ENCODE measurements at regions of chr1 and their contacts with region 1.

Region 1: GRCh38 chr1:147890177-147890790 is 12.3 kb upstream of the GJA8 start:
- DNase-seq: peak; percentile 87
- H3K4me3 ChIP-seq: no peak overlapping the region
- H3K27ac ChIP-seq: no peak overlapping the region
- H3K4me1 ChIP-seq: peaks cover 0 to 15% (median 5%) of the 10 kb centered on the region in 6 donors
- H3K27me3 ChIP-seq: peaks cover 0 to 20% (median 0%) of the 10 kb centered on the region in 7 donors
- CTCF ChIP-seq: peak; percentile 15 to 71 (median 56)
- POLR2A ChIP-seq: no peak

Region 2: DNA sequence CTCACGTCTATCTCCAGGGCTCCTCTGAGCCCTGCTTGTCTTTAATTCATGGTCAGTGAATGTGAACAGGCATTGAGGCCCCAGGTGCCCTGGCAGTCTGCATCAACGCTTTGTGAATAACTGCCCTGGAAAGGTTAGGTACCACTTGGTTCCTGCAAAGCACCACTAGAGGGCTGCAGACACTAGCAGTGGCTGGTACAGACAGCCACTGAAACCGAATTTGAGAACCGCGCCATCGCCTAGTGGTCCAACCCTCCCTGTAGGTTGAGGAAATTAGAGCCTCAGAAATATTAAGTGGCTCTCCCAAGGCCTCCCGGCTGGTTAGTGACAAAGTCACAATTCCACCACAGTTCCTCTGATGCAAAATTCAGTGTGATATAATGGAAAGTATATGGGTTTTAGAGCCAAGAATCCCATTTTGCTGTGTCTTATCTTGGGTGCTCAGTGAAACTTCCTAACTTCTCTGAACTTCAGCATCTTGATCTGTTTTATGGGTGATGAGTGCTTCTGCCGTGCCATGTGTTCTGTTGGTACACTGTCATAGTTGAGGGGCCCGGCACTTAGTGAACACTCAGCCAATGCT is 395.2 kb before region 1 on chr1:
- intact Hi-C with region 1: loop called (anchors 10 kb)
- DNase-seq: peak; percentile 83
- H3K4me3 ChIP-seq: no peak overlapping the region
- H3K27ac ChIP-seq: no peak overlapping the region
- H3K4me1 ChIP-seq: peaks cover 0 to 16% (median 11%) of the 10 kb centered on the region in 6 donors
- H3K27me3 ChIP-seq: peaks cover 0 to 8% (median 0%) of the 10 kb centered on the region in 7 donors
- CTCF ChIP-seq: peak; percentile 70 to 88 (median 85)
- POLR2A ChIP-seq: no peak

Region 3: DNA sequence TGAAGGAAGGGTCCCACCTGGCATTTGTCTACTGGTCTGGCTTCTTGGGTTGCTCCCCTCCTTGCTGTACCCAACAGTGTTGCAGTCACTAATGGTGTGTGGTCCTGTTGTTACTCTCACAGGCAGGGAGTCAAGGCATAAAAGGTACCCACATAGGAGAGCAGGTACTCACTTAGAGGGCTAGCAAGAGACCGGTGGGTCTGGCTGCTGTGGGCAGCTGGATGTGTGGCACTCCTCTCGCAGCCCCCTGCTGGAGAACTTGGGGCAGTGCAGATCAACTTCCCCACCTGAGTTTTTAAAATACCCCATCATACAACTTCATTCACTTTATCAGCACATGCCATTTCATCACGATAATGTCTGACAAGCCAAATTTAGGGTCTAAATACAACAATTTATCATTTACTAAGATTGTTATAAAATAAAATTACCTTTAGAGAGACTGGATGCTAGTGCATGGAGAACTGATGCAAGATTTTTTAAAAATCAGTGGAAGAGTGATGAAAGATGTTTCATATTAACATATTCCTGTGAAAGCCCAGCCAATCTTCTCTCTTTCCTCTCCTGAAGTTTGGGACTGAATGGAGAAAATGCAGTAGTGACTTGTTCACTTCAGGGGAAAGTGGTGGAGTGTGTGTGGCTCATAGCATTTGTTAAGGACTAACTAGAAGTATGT is 262.7 kb before region 1 on chr1:
- intact Hi-C with region 1: loop called (anchors 10 kb)
- DNase-seq: peak; percentile 86
- H3K4me3 ChIP-seq: no peak overlapping the region
- H3K27ac ChIP-seq: peak overlapping the region in 4 of 8 donors; percentile 59 to 72 (median 62)
- H3K4me1 ChIP-seq: peaks cover 0 to 61% (median 24%) of the 10 kb centered on the region in 6 donors
- H3K27me3 ChIP-seq: no peaks in the 10 kb centered on the region
- CTCF ChIP-seq: peak; percentile 43 to 93 (median 86)
- POLR2A ChIP-seq: no peak

Region 4: GRCh38 chr1:147670317-147671041 is 219.8 kb before region 1 on chr1 and contains the start of gene ACP6:
- intact Hi-C with region 1: no loop called
- DNase-seq: peak; percentile 98
- H3K4me3 ChIP-seq: peak within 1 kb of the TSS; percentile 76 to 94 (median 86)
- H3K27ac ChIP-seq: peak within 1 kb of the TSS; percentile 66 to 85 (median 81)
- H3K4me1 ChIP-seq: peaks cover 6 to 25% (median 16%) of the 10 kb centered on the region in 6 donors
- H3K27me3 ChIP-seq: peaks cover 0 to 4% (median 0%) of the 10 kb centered on the region in 7 donors
- CTCF ChIP-seq: peak in 1 of 11 experiments; percentile 13
- POLR2A ChIP-seq: no peak
- total RNA-seq, gene ACP6: 7.1 to 18.8 (median 9.6) TPM

Region 5: GRCh38 chr1:147723691-147724323 is 166.5 kb before region 1 on chr1:
- intact Hi-C with region 1: loop called (anchors 5 kb)
- DNase-seq: no peak
- H3K4me3 ChIP-seq: no peak overlapping the region
- H3K27ac ChIP-seq: no peak overlapping the region
- H3K4me1 ChIP-seq: no peaks in the 10 kb centered on the region
- H3K27me3 ChIP-seq: peaks cover 0 to 36% (median 0%) of the 10 kb centered on the region in 7 donors
- CTCF ChIP-seq: peak in 9 of 11 experiments; percentile 25 to 64 (median 39)
- POLR2A ChIP-seq: no peak